Activated B cell treated with CpG ODN at 0.5 μM for 24 hours (primary cell): ENCODE measurements at regions of chr3 and their contacts with region 1.

Region 1: DNA sequence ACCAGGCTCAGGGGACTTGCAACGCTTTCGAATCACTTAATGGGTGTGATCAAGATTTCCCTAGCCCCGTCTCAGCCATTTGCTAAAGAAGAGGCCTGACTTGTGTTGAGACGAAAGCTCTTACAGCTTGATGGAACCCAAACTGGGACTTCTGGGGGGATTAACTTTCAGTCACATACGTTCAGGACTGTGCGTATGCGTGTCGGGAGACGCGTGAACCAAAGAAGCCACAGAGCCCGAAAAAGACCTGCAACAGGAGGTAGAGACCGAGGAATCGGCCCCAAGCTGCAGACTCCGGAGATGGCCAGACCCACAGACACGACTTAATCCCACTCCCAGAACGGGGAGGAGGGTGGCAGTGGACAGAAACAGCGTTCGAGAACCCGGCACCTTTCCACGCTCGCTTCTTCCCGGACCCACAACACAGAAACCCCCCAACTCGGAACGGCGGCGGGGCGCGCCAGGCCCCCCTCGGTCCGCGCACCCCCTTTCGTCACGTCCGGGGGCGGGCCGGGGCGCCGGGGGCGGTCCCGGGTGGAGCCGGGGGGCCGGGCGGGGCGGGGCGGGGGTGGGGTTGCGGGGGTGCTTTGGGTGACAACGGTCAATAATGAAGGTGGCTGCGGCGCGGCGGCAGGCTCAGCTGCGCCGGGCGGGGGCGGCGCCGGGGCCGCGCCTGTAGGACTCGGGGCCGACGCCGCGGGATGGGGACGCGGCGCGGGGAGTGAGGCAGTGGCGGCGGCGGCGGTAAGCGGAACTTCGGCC is at the start of gene ATP11B:
- DNase-seq: peak; percentile 84
- ATAC-seq: peak; percentile 75
- H3K4me3 Mint-ChIP-seq: peak within 1 kb of the TSS; percentile 99
- H3K27ac Mint-ChIP-seq: peak within 1 kb of the TSS; percentile 99
- H3K4me1 Mint-ChIP-seq: peaks cover 37% of the 10 kb centered on the region
- H3K27me3 Mint-ChIP-seq: no peaks in the 10 kb centered on the region
- CTCF ChIP-seq: no peak
- total RNA-seq, gene ATP11B: 87.4 and 93.3 TPM in 2 replicates

Region 2: DNA sequence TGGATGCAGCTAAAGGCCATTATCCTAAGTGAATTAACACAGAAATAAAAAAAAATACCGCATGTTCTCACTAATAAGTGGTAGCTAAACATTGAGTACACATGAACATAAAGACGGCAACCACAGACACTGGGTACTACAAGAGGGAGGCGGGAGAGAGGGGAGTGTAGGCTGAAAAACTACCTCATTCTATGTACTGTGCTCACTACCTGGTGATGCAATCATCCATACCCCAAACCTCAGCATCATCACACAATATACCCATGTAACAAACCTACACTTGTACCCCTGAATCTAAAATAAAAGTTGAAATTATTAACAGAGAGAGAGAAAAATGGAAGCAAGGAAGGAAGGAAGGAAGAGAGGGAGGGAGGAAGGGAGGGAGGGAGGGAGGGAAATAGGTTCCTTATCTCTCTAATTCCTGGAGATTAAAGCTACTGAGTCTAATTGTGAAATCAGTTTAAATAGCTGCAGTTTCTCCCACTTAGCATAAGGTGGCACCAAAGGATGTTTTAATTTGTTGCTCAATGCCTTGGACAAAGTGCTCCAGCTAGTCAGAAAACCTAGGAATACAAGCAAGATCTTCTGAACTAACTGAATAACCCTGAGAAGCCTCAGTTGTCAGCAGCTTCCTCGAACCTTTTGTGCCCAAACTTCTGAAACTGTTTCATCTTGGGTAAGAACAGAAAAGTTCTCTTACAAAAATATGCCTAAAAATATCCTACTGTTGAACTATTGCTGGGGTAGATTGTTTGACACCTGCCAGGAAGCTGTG is 79.2 kb before region 1 on chr3:
- CTCF ChIA-PET with region 1: interaction called, 25 read pairs
- POLR2A ChIA-PET with region 1: interaction called, 7 read pairs
- intact Hi-C with region 1: loop called (anchors 2 kb)
- DNase-seq: no peak
- ATAC-seq: peak; percentile 58
- H3K4me3 Mint-ChIP-seq: no peak overlapping the region
- H3K27ac Mint-ChIP-seq: no peak overlapping the region
- H3K4me1 Mint-ChIP-seq: peaks cover 5% of the 10 kb centered on the region
- H3K27me3 Mint-ChIP-seq: peaks cover 5% of the 10 kb centered on the region
- CTCF ChIP-seq: no peak

Region 3: DNA sequence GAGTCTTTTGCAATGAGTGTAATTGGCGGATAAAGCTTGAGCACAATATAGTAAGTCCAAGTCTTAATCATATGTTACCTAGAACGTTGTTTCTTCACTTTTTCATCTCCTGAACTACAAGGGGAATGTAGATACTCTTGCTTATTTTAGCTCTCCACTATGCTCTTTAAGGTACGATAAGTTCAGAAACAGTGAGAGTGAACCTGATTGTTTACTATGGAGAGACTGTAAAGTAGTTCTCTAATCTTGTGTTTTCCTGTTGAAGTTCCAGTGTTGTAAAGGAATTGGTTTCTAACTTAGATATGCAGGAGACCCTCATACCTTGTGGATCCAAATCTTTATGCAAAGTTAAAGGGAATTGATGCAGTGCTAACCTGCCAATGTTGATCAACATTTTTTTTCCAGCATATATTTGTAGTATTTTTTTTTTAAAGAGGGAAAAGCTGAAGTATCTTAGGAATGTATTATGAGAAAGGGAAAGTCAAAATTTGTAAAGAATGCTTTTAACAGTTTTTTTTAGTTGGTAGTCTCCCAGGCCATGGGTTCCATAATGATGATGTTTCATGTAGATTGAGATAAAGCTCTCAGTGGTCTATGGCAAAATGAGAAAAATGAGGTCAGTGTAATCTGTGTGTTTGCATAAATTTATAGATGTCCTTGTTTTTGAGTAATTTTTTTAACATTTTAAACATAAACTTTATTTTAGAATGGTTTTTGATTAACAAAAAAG is 15.1 kb after region 1 on chr3:
- CTCF ChIA-PET with region 1: no interaction called
- POLR2A ChIA-PET with region 1: interaction called, 3 read pairs
- intact Hi-C with region 1: loop called (anchors 2 kb)
- DNase-seq: no peak
- ATAC-seq: no peak
- H3K4me3 Mint-ChIP-seq: no peak overlapping the region
- H3K27ac Mint-ChIP-seq: no peak overlapping the region
- H3K4me1 Mint-ChIP-seq: peaks cover 33% of the 10 kb centered on the region
- H3K27me3 Mint-ChIP-seq: no peaks in the 10 kb centered on the region
- CTCF ChIP-seq: no peak

Region 4: DNA sequence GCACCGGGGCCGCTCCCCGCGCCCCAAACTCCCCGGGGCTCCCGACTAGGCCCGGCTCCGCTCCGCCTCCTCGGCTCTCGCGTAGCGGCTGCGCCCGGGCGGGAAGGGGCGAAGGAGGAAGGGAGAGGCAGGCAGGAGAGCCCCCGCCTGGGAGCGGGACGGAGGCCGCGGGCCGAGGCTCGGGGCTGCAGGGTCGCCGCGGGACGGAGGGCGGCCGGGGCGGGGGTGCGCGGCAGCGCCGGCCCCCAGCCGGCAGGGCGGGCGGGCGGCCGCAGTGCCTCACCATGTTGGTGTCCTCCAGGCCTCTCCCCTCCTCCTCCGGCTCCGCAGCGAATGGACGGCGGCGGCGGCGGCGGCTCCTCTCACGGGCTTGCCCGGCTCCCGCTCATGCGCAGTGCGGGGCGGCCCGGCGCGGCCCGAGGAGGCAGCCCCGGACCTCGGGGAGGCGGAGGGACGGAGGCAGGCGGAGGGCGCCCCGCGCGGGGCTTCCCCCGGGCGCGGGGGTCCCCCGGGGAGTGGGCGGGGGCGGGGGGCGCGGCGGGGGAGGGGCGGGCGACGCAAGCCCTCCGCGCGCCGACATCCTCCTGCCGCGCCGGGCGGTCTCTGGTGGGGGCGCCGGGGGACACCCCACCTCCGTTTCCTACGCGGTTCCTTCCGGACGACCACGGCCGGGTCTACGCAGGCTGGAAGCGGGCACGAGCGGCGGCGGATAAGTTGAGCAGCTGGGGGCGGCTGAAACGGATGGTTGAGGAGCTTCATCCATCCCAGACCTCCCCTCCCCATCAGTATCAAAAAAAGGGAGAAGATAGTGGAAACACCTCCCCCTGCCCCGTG is 187.3 kb after region 1 on chr3 and contains the start of gene DCUN1D1:
- CTCF ChIA-PET with region 1: no interaction called
- POLR2A ChIA-PET with region 1: interaction called, 4 read pairs
- intact Hi-C with region 1: loop called (anchors 5 kb)
- DNase-seq: peak; percentile 90
- ATAC-seq: peak; percentile 89
- H3K4me3 Mint-ChIP-seq: peak within 1 kb of the TSS; percentile 93
- H3K27ac Mint-ChIP-seq: peak within 1 kb of the TSS; percentile 84
- H3K4me1 Mint-ChIP-seq: peaks cover 33% of the 10 kb centered on the region
- H3K27me3 Mint-ChIP-seq: no peaks in the 10 kb centered on the region
- CTCF ChIP-seq: no peak
- total RNA-seq, gene DCUN1D1: 36.7 and 44.2 TPM in 2 replicates